ENCODE measurements at regions of chr13 and their contacts with region 1.

Region 1: GRCh38 chr13:113875837-113876281 is 12.0 kb upstream of the GAS6 start:
- DNase-seq: peak in 4 of 9 experiments; percentile 11 to 83 (median 76)
- ATAC-seq: peak; percentile 72
- H3K4me3 ChIP-seq: no peak overlapping the region
- H3K4me3 Mint-ChIP-seq: peak overlapping the region; percentile 26
- H3K27ac ChIP-seq: peak overlapping the region in 1 of 2 experiments; percentile 42
- H3K27ac Mint-ChIP-seq: peak overlapping the region; percentile 75
- H3K4me1 ChIP-seq: peaks cover 2% of the 10 kb centered on the region
- H3K4me1 Mint-ChIP-seq: peaks cover 14% of the 10 kb centered on the region
- H3K27me3 ChIP-seq: peaks cover 0 to 5% of the 10 kb centered on the region in 2 experiments
- H3K27me3 Mint-ChIP-seq: peaks cover 9% of the 10 kb centered on the region
- CTCF ChIP-seq: no peak

Region 2: GRCh38 chr13:113153810-113154748 is 721.8 kb before region 1 on chr13:
- CTCF ChIA-PET with region 1: no interaction called
- POLR2A ChIA-PET with region 1: no interaction called
- intact Hi-C with region 1: no loop called
- DNase-seq: peak; percentile 51 to 88 (median 75)
- ATAC-seq: peak; percentile 84
- H3K4me3 ChIP-seq: peak overlapping the region; percentile 52 to 56
- H3K4me3 Mint-ChIP-seq: peak overlapping the region; percentile 83
- H3K27ac ChIP-seq: peak overlapping the region; percentile 19 to 72
- H3K27ac Mint-ChIP-seq: peak overlapping the region; percentile 78
- H3K4me1 ChIP-seq: peaks cover 21% of the 10 kb centered on the region
- H3K4me1 Mint-ChIP-seq: peaks cover 17% of the 10 kb centered on the region
- H3K27me3 ChIP-seq: peaks cover 0 to 6% of the 10 kb centered on the region in 2 experiments
- H3K27me3 Mint-ChIP-seq: peaks cover 4% of the 10 kb centered on the region
- CTCF ChIP-seq: no peak

Region 3: DNA sequence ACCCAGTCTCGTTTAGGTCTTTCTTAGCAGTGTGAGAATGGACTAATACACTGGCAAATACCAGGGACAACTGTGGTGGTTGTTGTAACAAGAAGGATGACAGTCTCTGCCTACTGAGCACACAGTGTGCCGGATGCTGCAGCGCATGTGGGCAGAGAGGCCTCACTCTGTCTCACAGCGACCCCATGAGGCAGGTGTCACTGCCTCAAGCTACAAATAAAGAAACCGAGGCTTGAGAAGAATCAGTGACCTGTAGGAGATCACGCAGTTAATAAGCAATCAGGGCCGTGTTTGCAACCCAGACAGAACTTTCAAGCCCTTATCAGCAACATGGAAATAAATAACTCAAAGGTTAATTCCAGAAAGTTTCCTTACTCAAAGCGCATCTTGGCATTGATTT is 28.6 kb after region 1 on chr13:
- CTCF ChIA-PET with region 1: no interaction called
- POLR2A ChIA-PET with region 1: no interaction called
- intact Hi-C with region 1: no loop called
- DNase-seq: peak in 5 of 9 experiments; percentile 23 to 62 (median 44)
- ATAC-seq: peak; percentile 40
- H3K4me3 ChIP-seq: no peak overlapping the region
- H3K4me3 Mint-ChIP-seq: no peak overlapping the region
- H3K27ac ChIP-seq: no peak overlapping the region
- H3K27ac Mint-ChIP-seq: no peak overlapping the region
- H3K4me1 ChIP-seq: no peaks in the 10 kb centered on the region
- H3K4me1 Mint-ChIP-seq: peaks cover 10% of the 10 kb centered on the region
- H3K27me3 ChIP-seq: no peaks in the 10 kb centered on the region
- H3K27me3 Mint-ChIP-seq: peaks cover 8% of the 10 kb centered on the region
- CTCF ChIP-seq: no peak

Region 4: DNA sequence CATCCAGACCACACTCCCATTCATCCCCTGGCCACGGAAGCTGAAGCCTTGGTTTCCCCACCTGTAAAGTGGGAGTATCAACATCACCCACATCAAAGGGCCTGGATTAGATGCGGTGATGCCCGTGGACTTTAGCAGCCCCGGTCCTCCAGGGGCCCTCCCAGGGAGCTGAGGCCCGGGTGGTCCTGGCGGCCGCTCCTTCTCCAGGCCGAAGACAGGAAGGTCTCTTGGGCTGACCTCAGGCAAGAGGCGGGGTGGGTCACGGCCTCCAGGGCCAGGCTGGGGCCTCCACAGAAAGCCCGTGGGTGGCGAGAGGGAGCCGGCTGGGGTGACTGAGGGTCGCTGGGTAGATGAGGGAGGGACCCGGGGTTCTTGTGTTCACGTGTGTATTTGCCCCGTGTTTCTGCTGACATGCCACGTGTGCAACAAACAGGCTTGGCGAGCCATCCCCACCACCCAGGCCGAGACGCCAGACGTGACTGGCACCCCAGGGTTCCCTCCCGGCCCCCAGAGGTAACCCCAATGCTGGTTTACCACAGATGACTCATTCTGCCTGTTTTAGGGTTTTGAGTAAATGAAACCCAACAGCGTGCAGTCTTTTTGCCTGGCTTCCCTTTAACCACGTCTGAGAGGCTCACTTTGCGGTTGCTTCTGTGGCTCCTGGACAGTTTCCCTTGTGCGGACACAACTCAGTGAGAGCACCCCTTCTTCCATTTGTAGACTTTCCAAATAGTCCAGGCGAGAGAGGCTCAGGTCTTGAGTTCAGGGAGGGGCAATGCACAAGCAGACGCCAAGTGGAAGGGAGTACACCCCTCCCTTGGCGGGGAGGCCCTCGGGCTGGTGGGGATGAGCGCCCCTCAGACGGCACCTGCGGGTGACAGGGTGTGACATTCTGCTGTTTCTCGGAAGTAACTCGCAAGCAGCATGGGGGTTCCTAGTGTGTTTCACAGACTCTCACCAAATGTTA is 55.1 kb after region 1 on chr13:
- CTCF ChIA-PET with region 1: no interaction called
- POLR2A ChIA-PET with region 1: no interaction called
- intact Hi-C with region 1: loop called in 1 of 2 experiments (anchors 1 kb)
- DNase-seq: peak; percentile 9 to 81 (median 67)
- ATAC-seq: peak; percentile 75
- H3K4me3 ChIP-seq: no peak overlapping the region
- H3K4me3 Mint-ChIP-seq: no peak overlapping the region
- H3K27ac ChIP-seq: no peak overlapping the region
- H3K27ac Mint-ChIP-seq: no peak overlapping the region
- H3K4me1 ChIP-seq: peaks cover 3% of the 10 kb centered on the region
- H3K4me1 Mint-ChIP-seq: peaks cover 12% of the 10 kb centered on the region
- H3K27me3 ChIP-seq: peaks cover 0 to 7% of the 10 kb centered on the region in 2 experiments
- H3K27me3 Mint-ChIP-seq: peaks cover 2% of the 10 kb centered on the region
- CTCF ChIP-seq: no peak

Measured in CD8-positive, alpha-beta T cell (primary cell).